GM23248 (cell line): ENCODE measurements at regions of chr15 and their contacts with region 1.

Region 1: DNA sequence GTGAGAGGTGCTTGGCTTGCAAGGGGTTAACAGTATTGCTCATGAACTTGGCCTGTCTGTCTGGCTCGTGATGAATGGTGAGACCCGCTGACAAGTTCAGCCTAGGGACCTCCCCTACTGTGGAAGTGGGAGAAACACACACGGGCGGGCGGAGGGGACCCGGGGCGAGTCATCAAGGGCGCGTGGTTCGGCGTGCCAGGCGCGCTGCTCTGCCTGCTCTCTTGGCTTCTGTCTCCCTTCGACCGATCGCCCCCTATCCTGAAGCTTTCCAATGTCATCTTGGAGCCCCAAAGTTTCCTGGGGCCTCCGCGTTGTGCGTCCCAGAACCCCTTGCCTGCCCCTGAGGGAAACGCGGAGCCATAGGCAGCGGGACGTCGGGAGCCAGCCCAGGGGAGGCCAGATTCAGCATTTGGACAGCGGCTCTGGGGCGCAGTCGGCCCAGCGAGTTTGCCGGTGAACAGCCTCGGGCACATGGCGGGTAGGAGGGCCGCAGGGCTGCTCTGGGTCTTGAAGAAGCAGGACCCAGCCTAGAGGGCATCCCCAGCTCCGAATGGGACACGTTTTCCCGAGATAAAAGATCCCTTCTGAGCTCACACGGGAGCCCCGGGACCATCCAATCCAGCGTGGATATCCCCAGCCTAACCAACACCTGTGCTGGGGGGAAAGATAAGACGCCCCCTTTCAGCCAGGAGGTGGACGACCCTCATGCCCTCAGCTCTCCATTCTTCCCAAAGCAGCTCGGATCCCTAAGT is 27.0 kb upstream of the POLG start:
- DNase-seq: peak; percentile 78
- H3K4me3 ChIP-seq: no peak overlapping the region
- H3K27ac ChIP-seq: no peak overlapping the region
- H3K4me1 ChIP-seq: no peaks in the 10 kb centered on the region
- H3K27me3 ChIP-seq: peaks cover 88% of the 10 kb centered on the region

Region 2: GRCh38 chr15:89429023-89429422 is 67.4 kb after region 1 on chr15:
- in situ Hi-C with region 1: loop called (anchors 10 kb)
- DNase-seq: peak; percentile 47
- H3K4me3 ChIP-seq: no peak overlapping the region
- H3K27ac ChIP-seq: no peak overlapping the region
- H3K4me1 ChIP-seq: no peaks in the 10 kb centered on the region
- H3K27me3 ChIP-seq: peaks cover 50% of the 10 kb centered on the region